ENCODE measurements at regions of chr3 and their contacts with region 1.

Region 1: GRCh38 chr3:51501833-51502561 is 2.2 kb upstream of the DCAF1 start:
- ATAC-seq: peak in 4 of 8 experiments; percentile 3 to 18 (median 12)
- H3K4me3 ChIP-seq: no peak overlapping the region
- H3K27ac ChIP-seq: no peak overlapping the region
- H3K4me1 ChIP-seq: peaks cover 2 to 5% of the 10 kb centered on the region in 2 donors

Region 2: DNA sequence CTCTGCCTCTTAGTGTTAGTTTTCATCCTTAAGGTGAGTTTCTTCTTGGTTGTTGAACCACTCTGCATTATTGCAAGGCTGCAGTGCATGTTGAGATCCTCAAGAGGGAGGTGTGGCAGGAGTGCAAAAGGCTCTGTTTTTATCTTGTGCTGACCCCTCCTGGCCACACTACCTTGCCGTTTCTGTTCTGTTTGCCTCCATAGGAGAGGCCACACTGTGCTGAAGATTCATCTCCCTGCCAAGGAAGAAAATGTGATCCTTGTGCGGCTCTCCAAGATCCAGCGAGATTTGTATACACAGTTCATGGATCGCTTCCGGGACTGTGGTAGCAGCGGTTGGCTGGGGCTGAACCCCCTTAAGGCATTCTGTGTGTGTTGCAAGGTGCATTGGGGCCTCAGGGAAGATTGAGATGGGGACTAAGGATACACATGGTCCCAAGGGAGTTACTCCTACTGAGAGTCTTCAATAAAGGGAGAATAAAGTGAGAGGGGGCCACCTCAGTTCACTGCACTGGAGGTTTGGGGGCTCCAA is 136.0 kb after region 1 on chr3:
- in situ Hi-C with region 1: loop called in 2 of 9 experiments (anchors 10 to 25 kb)
- ATAC-seq: peak in 5 of 8 experiments; percentile 37 to 99 (median 94)
- H3K4me3 ChIP-seq: no peak overlapping the region
- H3K27ac ChIP-seq: no peak overlapping the region
- H3K4me1 ChIP-seq: no peaks in the 10 kb centered on the region

Region 3: DNA sequence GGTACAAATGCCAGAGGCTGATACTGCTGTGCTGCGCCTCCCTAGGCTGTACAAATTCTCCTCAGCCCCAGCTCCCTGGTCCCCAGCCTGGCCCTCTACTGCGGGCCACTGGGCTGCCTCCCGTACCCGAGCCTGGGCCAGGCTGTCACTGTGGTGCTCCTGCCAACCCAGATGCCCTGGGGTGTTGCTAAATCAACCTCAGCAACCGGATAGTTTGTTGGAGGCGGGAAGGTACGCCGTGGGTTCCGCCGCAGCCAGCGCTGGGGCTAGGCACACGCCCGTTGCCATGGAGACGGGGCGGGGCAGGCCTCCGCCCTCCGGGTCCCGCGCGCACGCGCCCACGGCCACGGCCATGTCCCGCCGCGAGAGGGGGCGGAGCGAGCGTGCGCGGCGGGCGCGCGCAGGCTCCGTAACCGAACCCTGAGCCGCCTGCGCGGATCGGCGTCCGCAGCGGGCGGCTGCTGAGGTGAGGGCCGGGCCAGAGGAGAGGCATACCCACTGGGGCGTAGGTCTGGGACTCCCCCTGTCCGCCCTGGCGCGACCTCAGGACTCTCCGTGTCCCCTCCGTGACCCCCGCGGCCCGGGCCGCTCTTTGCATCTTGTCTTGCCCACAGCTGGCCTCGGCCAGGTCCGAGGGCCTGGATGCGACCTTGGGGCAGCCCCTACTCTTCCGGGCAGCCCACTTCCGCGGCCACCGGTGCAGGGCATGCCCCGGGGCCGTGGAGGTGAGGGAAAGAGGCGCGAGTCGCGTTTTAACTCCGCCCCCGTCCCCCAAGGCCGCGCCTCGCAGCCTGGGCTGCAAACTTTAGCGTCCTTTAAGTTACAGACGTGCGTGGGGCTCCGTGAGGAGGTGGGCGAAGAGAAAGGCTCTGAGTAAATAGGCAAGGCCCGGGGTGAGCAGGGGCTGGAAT is 169.1 kb after region 1 on chr3 and contains the start of gene TEX264:
- in situ Hi-C with region 1: loop called in 6 of 9 experiments (anchors 10 to 25 kb)
- ATAC-seq: peak; percentile 77 to 93 (median 87)
- H3K4me3 ChIP-seq: peak within 1 kb of the TSS; percentile 50 to 80 (median 62)
- H3K27ac ChIP-seq: peak within 1 kb of the TSS in 1 of 2 donors; percentile 61
- H3K4me1 ChIP-seq: peaks cover 0 to 7% of the 10 kb centered on the region in 2 donors
- total RNA-seq, gene TEX264: 16.6 to 64.7 (median 33.0) TPM

Region 4: GRCh38 chr3:51682079-51682478 is 180.1 kb after region 1 on chr3:
- in situ Hi-C with region 1: loop called in 2 of 9 experiments (anchors 25 kb)
- ATAC-seq: peak; percentile 63 to 92 (median 88)
- H3K4me3 ChIP-seq: no peak overlapping the region
- H3K27ac ChIP-seq: no peak overlapping the region
- H3K4me1 ChIP-seq: no peaks in the 10 kb centered on the region

Measured in motor neuron (in vitro differentiated cells).